ENCODE measurements at regions of chr2 and their contacts with region 1.

Region 1: GRCh38 chr2:172552547-172553291 is 3.2 kb upstream of the PDK1 start:
- DNase-seq: peak; percentile 96
- ATAC-seq: peak; percentile 8; the same call in 1 of the 2 replicates
- H3K4me3 ChIP-seq: no peak overlapping the region
- H3K27ac ChIP-seq: peak overlapping the region; percentile 48; the same call in 1 of the 2 replicates
- H3K4me1 ChIP-seq: peaks cover 10% of the 10 kb centered on the region
- H3K27me3 ChIP-seq: no peaks in the 10 kb centered on the region
- CTCF ChIP-seq: no peak
- POLR2A ChIP-seq: no peak
- RAD21 ChIP-seq: no peak

Region 2: GRCh38 chr2:172456002-172456401 is 96.7 kb before region 1 on chr2:
- CTCF ChIA-PET with region 1: no interaction called
- POLR2A ChIA-PET with region 1: no interaction called
- dilution Hi-C with region 1: no loop called
- in situ Hi-C with region 1: no loop called
- intact Hi-C with region 1: no loop called
- DNase-seq: no peak
- ATAC-seq: no peak
- H3K4me3 ChIP-seq: no peak overlapping the region
- H3K27ac ChIP-seq: no peak overlapping the region
- H3K4me1 ChIP-seq: no peaks in the 10 kb centered on the region
- H3K27me3 ChIP-seq: no peaks in the 10 kb centered on the region
- CTCF ChIP-seq: no peak
- POLR2A ChIP-seq: no peak
- RAD21 ChIP-seq: no peak

Region 3: GRCh38 chr2:172516299-172516698 is 36.4 kb before region 1 on chr2:
- CTCF ChIA-PET with region 1: no interaction called
- POLR2A ChIA-PET with region 1: no interaction called
- dilution Hi-C with region 1: no loop called
- in situ Hi-C with region 1: no loop called
- intact Hi-C with region 1: loop called (anchors 5 kb)
- DNase-seq: peak; percentile 93
- ATAC-seq: peak; percentile 73
- H3K4me3 ChIP-seq: no peak overlapping the region
- H3K27ac ChIP-seq: no peak overlapping the region
- H3K4me1 ChIP-seq: no peaks in the 10 kb centered on the region; the same call in 1 of the 2 replicates
- H3K27me3 ChIP-seq: no peaks in the 10 kb centered on the region
- CTCF ChIP-seq: no peak
- POLR2A ChIP-seq: no peak
- RAD21 ChIP-seq: no peak